Calu3 (cell line): ENCODE measurements at regions of chr2 and their contacts with region 1.

Region 1: GRCh38 chr2:208407667-208408066 is 1.1 kb downstream of the PTH2R start:
- DNase-seq: peak; percentile 64
- H3K4me3 Mint-ChIP-seq: peak overlapping the region; percentile 73
- H3K27ac Mint-ChIP-seq: no peak overlapping the region
- H3K4me1 Mint-ChIP-seq: peaks cover 10% of the 10 kb centered on the region
- H3K27me3 Mint-ChIP-seq: no peaks in the 10 kb centered on the region
- CTCF ChIP-seq: peak; percentile 67

Region 2: GRCh38 chr2:207951734-207952470 is 455.8 kb before region 1 on chr2:
- CTCF ChIA-PET with region 1: no interaction called
- intact Hi-C with region 1: no loop called
- DNase-seq: no peak
- H3K4me3 Mint-ChIP-seq: no peak overlapping the region
- H3K27ac Mint-ChIP-seq: no peak overlapping the region
- H3K4me1 Mint-ChIP-seq: peaks cover 22% of the 10 kb centered on the region
- H3K27me3 Mint-ChIP-seq: no peaks in the 10 kb centered on the region
- CTCF ChIP-seq: no peak

Region 3: DNA sequence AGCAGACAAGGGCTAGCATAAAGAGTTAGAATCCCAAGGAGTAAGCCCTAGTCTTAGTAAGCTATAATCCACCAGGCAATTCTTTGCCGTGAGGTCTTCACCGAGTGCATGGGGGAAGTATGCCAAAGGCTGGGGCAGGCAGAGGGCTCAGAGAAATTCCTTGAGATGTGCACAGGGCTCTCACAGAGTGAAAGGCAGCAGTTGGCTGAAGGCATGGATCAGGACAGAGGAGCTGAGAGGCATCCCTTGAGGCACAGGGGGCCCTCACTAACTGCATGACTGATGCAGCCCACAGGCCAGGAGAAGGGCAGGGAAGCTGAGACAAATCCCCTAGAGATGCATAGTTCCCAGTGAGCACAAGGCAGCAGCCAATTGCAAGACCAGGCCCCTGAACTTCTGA is 33.0 kb after region 1 on chr2:
- CTCF ChIA-PET with region 1: no interaction called
- intact Hi-C with region 1: no loop called
- DNase-seq: no peak
- H3K4me3 Mint-ChIP-seq: no peak overlapping the region
- H3K27ac Mint-ChIP-seq: no peak overlapping the region
- H3K4me1 Mint-ChIP-seq: no peaks in the 10 kb centered on the region
- H3K27me3 Mint-ChIP-seq: no peaks in the 10 kb centered on the region
- CTCF ChIP-seq: no peak

Region 4: GRCh38 chr2:208466151-208466919 is 58.7 kb after region 1 on chr2:
- CTCF ChIA-PET with region 1: no interaction called
- intact Hi-C with region 1: loop called (anchors 5 kb)
- DNase-seq: peak; percentile 70
- H3K4me3 Mint-ChIP-seq: no peak overlapping the region
- H3K27ac Mint-ChIP-seq: no peak overlapping the region
- H3K4me1 Mint-ChIP-seq: peaks cover 19% of the 10 kb centered on the region
- H3K27me3 Mint-ChIP-seq: no peaks in the 10 kb centered on the region
- CTCF ChIP-seq: peak; percentile 74

Region 5: DNA sequence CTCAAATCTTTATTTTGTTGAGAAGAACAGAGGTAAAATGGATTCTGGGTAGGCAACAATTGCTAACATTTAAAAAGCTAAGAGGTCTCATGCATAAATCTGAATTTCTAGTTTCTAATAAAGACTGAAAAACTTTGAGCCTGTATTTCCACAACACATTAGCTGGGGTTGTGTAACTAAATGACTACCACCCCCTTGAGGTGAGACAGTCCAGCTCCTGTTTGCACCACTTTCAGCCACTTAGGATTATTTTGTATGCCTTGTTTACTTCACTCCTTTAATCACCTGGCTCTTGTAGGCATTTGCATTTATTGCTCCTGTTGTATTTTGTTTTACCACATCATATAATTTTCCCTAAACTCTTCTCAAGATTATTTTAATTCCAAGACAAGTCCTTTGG is 375.5 kb after region 1 on chr2:
- CTCF ChIA-PET with region 1: no interaction called
- intact Hi-C with region 1: loop called (anchors 1 kb)
- DNase-seq: peak; percentile 11
- H3K4me3 Mint-ChIP-seq: no peak overlapping the region
- H3K27ac Mint-ChIP-seq: no peak overlapping the region
- H3K4me1 Mint-ChIP-seq: no peaks in the 10 kb centered on the region
- H3K27me3 Mint-ChIP-seq: no peaks in the 10 kb centered on the region
- CTCF ChIP-seq: no peak

Region 6: GRCh38 chr2:209322041-209322440 is 914.4 kb after region 1 on chr2:
- CTCF ChIA-PET with region 1: interaction called, 10 read pairs
- intact Hi-C with region 1: loop called (anchors 2 kb)
- DNase-seq: no peak
- H3K4me3 Mint-ChIP-seq: no peak overlapping the region
- H3K27ac Mint-ChIP-seq: no peak overlapping the region
- H3K4me1 Mint-ChIP-seq: peaks cover 14% of the 10 kb centered on the region
- H3K27me3 Mint-ChIP-seq: no peaks in the 10 kb centered on the region
- CTCF ChIP-seq: no peak

Region 7: GRCh38 chr2:209423562-209424198 is 1016.0 kb after region 1 on chr2 and contains the start of gene MAP2:
- CTCF ChIA-PET with region 1: interaction called, 3 read pairs
- intact Hi-C with region 1: loop called (anchors 2 kb)
- DNase-seq: peak; percentile 95
- H3K4me3 Mint-ChIP-seq: peak within 1 kb of the TSS; percentile 94
- H3K27ac Mint-ChIP-seq: peak within 1 kb of the TSS; percentile 84
- H3K4me1 Mint-ChIP-seq: peaks cover 35% of the 10 kb centered on the region
- H3K27me3 Mint-ChIP-seq: no peaks in the 10 kb centered on the region
- CTCF ChIP-seq: peak; percentile 98
- total RNA-seq, gene MAP2: 9.5 and 11.2 TPM in 2 replicates